ENCODE measurements at regions of chr12 and their contacts with region 1.

Region 1: GRCh38 chr12:132414634-132415326 is 75.2 kb upstream of the FBRSL1 start:
- DNase-seq: peak; percentile 82
- ATAC-seq: peak; percentile 96
- H3K4me3 Mint-ChIP-seq: no peak overlapping the region
- H3K27ac Mint-ChIP-seq: no peak overlapping the region
- H3K4me1 Mint-ChIP-seq: no peaks in the 10 kb centered on the region
- H3K27me3 Mint-ChIP-seq: peaks cover 5% of the 10 kb centered on the region

Region 2: DNA sequence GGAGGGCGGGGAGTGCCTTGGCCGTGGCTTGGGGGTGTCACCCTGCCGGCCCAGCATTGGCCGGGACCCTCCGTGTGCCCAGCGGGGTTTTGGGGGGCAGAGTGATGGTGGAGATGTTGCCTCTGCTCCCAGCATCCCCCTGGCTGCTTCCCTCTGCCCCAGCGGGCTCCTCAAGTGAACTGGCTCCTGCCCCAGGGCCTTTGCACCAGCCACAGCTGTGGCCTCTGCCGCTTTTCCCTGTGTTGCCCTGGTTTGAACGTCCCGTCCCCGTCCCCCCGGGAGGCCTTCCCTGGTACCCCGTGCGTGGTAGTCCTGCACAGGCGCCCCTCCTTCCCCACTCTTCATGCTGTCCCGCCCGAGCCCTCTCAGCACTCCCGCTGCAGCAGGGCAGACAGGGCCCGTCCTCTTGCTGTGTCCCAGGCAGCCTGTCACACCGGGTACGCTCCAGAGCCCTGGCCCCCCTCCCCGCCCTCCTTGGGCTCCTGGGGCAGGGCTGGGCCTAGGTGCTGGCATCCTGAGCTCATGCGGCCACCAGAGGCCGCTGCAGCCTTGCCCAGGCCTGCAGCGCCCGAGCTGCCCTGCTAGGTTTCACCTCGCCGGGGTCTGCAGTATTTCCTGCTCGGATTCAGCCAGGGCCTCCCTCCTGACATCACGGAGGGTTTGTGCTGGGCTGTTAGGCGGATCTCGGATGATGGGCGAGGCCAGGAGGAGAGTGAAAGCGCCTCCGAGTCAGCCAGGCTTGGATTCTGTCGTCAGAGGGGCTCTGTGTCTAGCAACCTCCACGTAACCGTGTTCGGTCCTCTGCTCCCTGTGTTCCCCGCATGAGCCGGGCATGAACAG is 261.1 kb before region 1 on chr12:
- CTCF ChIA-PET with region 1: interaction called, 23 read pairs
- DNase-seq: peak; percentile 80
- ATAC-seq: peak; percentile 87
- H3K4me3 Mint-ChIP-seq: no peak overlapping the region
- H3K27ac Mint-ChIP-seq: no peak overlapping the region
- H3K4me1 Mint-ChIP-seq: no peaks in the 10 kb centered on the region
- H3K27me3 Mint-ChIP-seq: no peaks in the 10 kb centered on the region

Region 3: GRCh38 chr12:132336451-132337413 is 78.0 kb before region 1 on chr12:
- CTCF ChIA-PET with region 1: no interaction called
- DNase-seq: no peak
- ATAC-seq: no peak
- H3K4me3 Mint-ChIP-seq: no peak overlapping the region
- H3K27ac Mint-ChIP-seq: no peak overlapping the region
- H3K4me1 Mint-ChIP-seq: no peaks in the 10 kb centered on the region
- H3K27me3 Mint-ChIP-seq: no peaks in the 10 kb centered on the region

Region 4: GRCh38 chr12:132385923-132386751 is 28.6 kb before region 1 on chr12:
- CTCF ChIA-PET with region 1: no interaction called
- DNase-seq: no peak
- ATAC-seq: no peak
- H3K4me3 Mint-ChIP-seq: no peak overlapping the region
- H3K27ac Mint-ChIP-seq: no peak overlapping the region
- H3K4me1 Mint-ChIP-seq: no peaks in the 10 kb centered on the region
- H3K27me3 Mint-ChIP-seq: peaks cover 3% of the 10 kb centered on the region

Region 5: DNA sequence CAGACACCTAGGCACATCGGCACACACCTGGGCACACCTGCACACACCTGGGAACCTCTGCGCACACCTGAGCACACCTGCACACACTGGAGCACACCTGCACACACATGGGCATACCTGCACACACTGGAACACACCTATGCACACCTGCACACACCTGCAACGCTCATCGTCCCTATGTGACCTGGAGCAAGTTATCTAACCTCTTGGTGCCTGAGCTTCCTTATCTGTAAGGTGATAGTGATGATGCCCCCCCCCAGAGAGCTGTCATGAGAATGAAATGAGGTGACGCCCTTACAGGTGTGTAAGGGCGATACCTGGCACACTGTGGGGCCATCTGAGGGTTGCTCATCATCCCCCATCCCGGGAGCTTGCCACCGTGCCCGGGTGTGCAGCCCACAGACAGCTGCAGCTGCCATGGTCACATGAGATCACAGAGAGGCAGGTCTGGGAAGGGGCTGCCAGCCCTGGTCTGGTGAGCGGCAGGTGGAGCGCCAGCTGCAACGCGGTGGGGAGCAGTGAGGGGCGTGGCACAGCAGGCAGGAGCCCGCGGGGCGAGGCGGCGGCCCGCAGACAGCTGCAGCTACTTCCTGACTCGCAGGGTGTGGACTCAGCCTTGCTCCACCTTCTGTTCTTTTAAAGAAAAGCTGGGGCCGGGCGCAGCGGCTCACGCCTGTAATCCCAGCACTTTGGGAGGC is 15.3 kb after region 1 on chr12:
- CTCF ChIA-PET with region 1: interaction called, 16 read pairs
- DNase-seq: peak; percentile 79
- ATAC-seq: peak; percentile 97
- H3K4me3 Mint-ChIP-seq: no peak overlapping the region
- H3K27ac Mint-ChIP-seq: peak overlapping the region; percentile 19
- H3K4me1 Mint-ChIP-seq: peaks cover 18% of the 10 kb centered on the region
- H3K27me3 Mint-ChIP-seq: peaks cover 15% of the 10 kb centered on the region

Region 6: DNA sequence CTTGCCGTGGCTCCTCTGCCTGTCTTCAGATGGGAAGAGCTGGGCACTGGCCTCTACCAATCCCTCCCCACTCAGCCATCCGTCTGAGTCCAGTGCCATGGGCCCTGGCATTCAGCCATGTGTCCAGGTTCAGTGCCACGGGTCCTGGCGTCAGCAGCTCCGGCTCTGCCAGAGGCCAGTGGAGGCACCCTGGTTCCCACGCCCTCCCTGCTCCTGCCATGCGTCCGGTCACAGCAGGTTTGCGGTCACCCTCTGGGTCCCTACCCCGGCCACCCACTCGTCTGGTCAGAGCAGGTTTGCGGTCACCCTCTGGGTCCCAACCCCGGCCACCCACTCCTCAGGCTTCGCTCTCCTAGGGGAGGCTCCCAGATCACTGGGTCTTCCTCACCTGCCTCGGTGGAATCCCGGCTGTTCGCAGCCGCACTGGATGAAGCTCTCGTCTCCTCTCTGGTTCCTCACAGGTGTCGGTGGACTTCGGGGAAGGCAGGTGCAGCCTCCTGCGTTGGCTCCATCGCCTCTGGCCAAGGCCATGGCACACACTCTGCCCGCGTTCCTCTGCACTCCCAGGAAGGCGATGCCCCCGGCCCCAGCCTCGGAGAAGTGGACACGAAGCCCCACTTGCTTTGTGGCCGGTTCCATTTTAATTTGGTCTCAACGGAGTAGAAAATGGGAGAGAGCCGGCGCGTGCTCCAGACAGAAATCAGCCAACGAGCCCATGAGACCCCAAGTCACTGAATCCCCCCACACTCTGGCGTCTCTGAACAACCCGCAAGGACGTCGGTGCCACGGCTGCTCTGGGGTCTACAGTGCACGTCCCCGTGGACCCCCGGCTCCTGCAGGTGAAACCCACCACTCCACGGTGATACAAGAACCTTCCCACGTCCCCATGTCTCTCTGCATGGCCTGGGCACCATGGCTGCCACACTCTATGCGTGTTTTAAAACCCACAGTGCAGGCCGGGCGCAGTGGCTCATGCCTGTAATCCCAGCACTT is 27.4 kb after region 1 on chr12:
- CTCF ChIA-PET with region 1: no interaction called
- DNase-seq: no peak
- ATAC-seq: no peak
- H3K4me3 Mint-ChIP-seq: no peak overlapping the region
- H3K27ac Mint-ChIP-seq: no peak overlapping the region
- H3K4me1 Mint-ChIP-seq: peaks cover 32% of the 10 kb centered on the region
- H3K27me3 Mint-ChIP-seq: no peaks in the 10 kb centered on the region

Region 7: GRCh38 chr12:132523576-132524331 is 109.0 kb after region 1 on chr12:
- CTCF ChIA-PET with region 1: interaction called, 53 read pairs
- DNase-seq: peak; percentile 78
- ATAC-seq: peak; percentile 87
- H3K4me3 Mint-ChIP-seq: no peak overlapping the region
- H3K27ac Mint-ChIP-seq: no peak overlapping the region
- H3K4me1 Mint-ChIP-seq: no peaks in the 10 kb centered on the region
- H3K27me3 Mint-ChIP-seq: no peaks in the 10 kb centered on the region

Region 8: GRCh38 chr12:132560614-132561426 is 146.0 kb after region 1 on chr12:
- CTCF ChIA-PET with region 1: interaction called, 34 read pairs
- DNase-seq: peak; percentile 76
- ATAC-seq: peak; percentile 48
- H3K4me3 Mint-ChIP-seq: peak overlapping the region; percentile 50
- H3K27ac Mint-ChIP-seq: no peak overlapping the region
- H3K4me1 Mint-ChIP-seq: peaks cover 17% of the 10 kb centered on the region
- H3K27me3 Mint-ChIP-seq: peaks cover 13% of the 10 kb centered on the region

Region 9: GRCh38 chr12:132614861-132615578 is 200.2 kb after region 1 on chr12:
- CTCF ChIA-PET with region 1: interaction called, 32 read pairs
- DNase-seq: peak; percentile 85
- ATAC-seq: peak; percentile 91
- H3K4me3 Mint-ChIP-seq: no peak overlapping the region
- H3K27ac Mint-ChIP-seq: no peak overlapping the region
- H3K4me1 Mint-ChIP-seq: peaks cover 1% of the 10 kb centered on the region
- H3K27me3 Mint-ChIP-seq: peaks cover 42% of the 10 kb centered on the region